MCF 10A (cell line): ENCODE measurements at regions of chr2 and their contacts with region 1.

Region 1: GRCh38 chr2:169705927-169706326 is 11.7 kb downstream of the PHOSPHO2 start:
- DNase-seq: peak; percentile 56
- H3K4me3 Mint-ChIP-seq: no peak overlapping the region
- H3K27ac Mint-ChIP-seq: no peak overlapping the region
- H3K4me1 Mint-ChIP-seq: no peaks in the 10 kb centered on the region
- H3K27me3 Mint-ChIP-seq: no peaks in the 10 kb centered on the region
- CTCF ChIP-seq: no peak

Region 2: DNA sequence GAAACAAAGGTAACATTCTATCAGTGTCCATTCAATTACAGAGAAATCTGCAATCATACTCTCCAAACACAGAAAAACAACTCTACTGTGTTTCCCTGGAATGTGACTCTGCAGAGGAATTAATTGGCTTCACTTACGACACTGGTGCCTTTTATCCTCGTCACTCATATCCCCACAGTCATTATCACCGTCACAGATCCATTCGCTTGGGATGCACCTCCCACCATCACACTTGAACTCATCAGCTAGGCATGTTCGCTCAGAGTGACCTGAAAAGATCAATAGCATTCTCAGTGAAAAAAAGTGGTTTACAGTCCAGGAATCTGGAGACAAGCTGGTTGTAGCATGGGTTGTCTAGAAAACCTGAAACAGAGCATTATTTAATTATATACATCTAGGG is 512.3 kb before region 1 on chr2:
- CTCF ChIA-PET with region 1: no interaction called
- POLR2A ChIA-PET with region 1: no interaction called
- intact Hi-C with region 1: no loop called
- DNase-seq: no peak
- H3K4me3 Mint-ChIP-seq: no peak overlapping the region
- H3K27ac Mint-ChIP-seq: no peak overlapping the region
- H3K4me1 Mint-ChIP-seq: no peaks in the 10 kb centered on the region
- H3K27me3 Mint-ChIP-seq: peaks cover 53% of the 10 kb centered on the region
- CTCF ChIP-seq: no peak

Region 3: DNA sequence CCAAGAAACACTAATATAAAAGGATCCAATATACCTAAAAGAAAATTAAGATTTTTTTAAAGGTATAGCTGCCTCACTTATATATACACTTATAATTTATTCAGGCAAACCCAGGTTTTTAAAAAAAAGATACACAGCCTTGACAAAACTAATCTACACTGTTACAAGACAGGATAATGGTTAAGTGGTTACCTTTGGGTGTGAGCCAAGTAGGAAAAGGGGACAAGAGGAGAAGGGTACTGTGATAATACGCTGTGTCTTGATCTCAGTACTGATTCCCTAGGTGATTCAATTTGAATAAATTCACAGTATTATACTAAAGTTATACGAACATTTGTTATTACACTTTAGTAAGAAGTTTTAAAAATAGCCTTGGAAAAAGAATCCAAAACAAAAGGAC is 165.8 kb before region 1 on chr2:
- CTCF ChIA-PET with region 1: no interaction called
- POLR2A ChIA-PET with region 1: no interaction called
- intact Hi-C with region 1: no loop called
- DNase-seq: no peak
- H3K4me3 Mint-ChIP-seq: no peak overlapping the region
- H3K27ac Mint-ChIP-seq: no peak overlapping the region
- H3K4me1 Mint-ChIP-seq: no peaks in the 10 kb centered on the region
- H3K27me3 Mint-ChIP-seq: no peaks in the 10 kb centered on the region
- CTCF ChIP-seq: no peak

Region 4: DNA sequence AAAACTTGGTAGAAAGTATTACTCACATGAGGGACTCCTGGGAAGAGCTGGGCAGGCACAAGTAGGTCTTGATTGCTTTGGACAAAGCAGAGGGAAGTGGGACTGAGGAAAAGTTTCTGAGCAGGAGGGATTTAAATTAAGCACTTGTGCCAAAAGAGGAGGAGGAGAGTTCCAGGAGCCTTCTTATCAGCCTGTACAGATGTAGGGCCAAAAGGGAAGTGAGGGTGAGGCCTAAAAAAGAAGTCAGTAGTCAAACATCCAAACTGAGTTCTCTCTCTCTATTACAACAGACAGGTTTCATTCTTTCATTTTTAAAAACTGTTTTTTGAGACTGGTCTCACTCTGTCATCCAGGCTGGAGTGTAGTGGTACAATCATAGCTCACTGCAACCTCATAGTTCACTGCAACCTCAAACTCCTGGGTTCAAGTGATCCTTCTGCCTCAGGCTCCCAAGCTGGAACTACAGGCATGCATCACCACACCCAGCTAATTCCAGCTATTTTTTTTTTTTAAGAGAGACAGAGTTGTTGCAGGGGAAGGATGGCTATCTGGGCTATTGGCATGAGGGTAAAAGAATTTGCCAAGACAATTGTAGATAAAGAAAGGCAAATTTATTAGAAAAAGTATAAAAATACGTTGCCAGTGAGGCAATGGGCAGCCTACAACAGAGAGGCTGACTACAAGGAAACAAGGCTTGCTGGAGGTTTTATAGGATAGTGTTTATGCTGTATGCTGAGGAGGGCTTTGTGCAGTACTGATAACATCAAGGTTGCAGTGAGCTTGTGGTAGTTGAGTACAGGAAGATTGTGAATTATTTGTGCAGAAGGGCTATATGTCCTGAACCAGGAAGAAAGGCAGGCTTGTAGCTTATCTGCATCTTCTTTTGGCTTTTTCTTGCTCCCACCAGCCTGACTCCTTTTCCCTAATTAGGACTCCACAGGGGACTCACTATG is 40.7 kb before region 1 on chr2:
- CTCF ChIA-PET with region 1: no interaction called
- POLR2A ChIA-PET with region 1: no interaction called
- intact Hi-C with region 1: no loop called
- DNase-seq: no peak
- H3K4me3 Mint-ChIP-seq: no peak overlapping the region
- H3K27ac Mint-ChIP-seq: no peak overlapping the region
- H3K4me1 Mint-ChIP-seq: no peaks in the 10 kb centered on the region
- H3K27me3 Mint-ChIP-seq: peaks cover 13% of the 10 kb centered on the region
- CTCF ChIP-seq: no peak

Region 5: GRCh38 chr2:169694113-169694903 is 11.6 kb before region 1 on chr2 and contains the starts of genes CFAP210 and PHOSPHO2:
- CTCF ChIA-PET with region 1: no interaction called
- POLR2A ChIA-PET with region 1: interaction called, 13 read pairs
- intact Hi-C with region 1: no loop called
- DNase-seq: peak; percentile 95
- H3K4me3 Mint-ChIP-seq: peak within 1 kb of the TSS; percentile 84
- H3K27ac Mint-ChIP-seq: peak within 1 kb of the TSS; percentile 91
- H3K4me1 Mint-ChIP-seq: peaks cover 6% of the 10 kb centered on the region
- H3K27me3 Mint-ChIP-seq: peaks cover 16% of the 10 kb centered on the region
- CTCF ChIP-seq: no peak
- total RNA-seq, gene CFAP210: not detected in 2 replicates
- total RNA-seq, gene PHOSPHO2: 5.4 and 6.0 TPM in 2 replicates